ENCODE measurements at regions of chr2 and their contacts with region 1.

Region 1: GRCh38 chr2:218466016-218466521 is 47.1 kb downstream of the VIL1 start:
- DNase-seq: peak; percentile 34
- ATAC-seq: peak; percentile 69
- H3K4me3 ChIP-seq: no peak overlapping the region
- H3K27ac ChIP-seq: no peak overlapping the region
- H3K4me1 ChIP-seq: 0 out of 2 replicates have a peak, but pooled peaks cover 3% of the 10 kb centered on the region
- H3K27me3 ChIP-seq: no peaks in the 10 kb centered on the region
- CTCF ChIP-seq: peak; percentile 68
- EP300 ChIP-seq: no peak
- POLR2A ChIP-seq: no peak
- RAD21 ChIP-seq: no peak

Region 2: DNA sequence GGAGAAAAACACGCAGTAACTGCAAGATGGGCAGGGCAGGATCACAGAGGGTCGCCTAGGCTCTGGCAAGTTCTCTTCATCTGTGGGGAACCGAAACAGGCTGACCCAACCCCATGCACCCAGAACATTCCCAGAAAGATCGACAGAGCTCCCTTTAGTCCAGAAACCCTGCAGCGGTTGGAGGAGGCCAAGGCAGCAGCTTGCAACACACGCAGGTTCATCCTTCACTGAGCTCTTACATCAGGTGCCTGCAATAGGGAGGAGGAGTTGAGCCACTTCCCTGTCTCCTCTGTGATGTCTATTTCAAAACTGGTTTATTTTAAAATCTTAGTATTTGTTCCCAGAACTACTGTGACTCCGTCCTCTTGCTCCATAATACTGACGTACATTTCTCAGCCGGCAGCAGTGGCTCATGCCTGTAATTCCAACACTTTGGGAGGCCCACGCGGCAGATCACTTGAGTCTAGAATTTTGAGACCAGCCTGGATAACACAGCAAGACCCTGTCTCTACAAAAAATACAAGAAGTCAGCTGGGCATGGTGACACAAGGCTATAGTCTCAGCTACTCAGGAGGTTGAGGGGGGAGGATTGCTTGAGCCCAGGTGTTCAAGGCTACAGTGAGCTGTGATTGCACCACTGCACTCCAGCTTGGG is 95.5 kb before region 1 on chr2:
- CTCF ChIA-PET with region 1: no interaction called
- POLR2A ChIA-PET with region 1: no interaction called
- in situ Hi-C with region 1: no loop called
- intact Hi-C with region 1: no loop called
- DNase-seq: peak; percentile 57
- ATAC-seq: peak; percentile 69
- H3K4me3 ChIP-seq: peak overlapping the region in 1 of 3 experiments; percentile 0; a peak in 1 of 6 replicates
- H3K27ac ChIP-seq: no peak overlapping the region
- H3K4me1 ChIP-seq: peaks cover 49% of the 10 kb centered on the region
- H3K27me3 ChIP-seq: peaks cover 2% of the 10 kb centered on the region in 2 experiments; a peak in 2 of 5 replicates
- CTCF ChIP-seq: no peak
- EP300 ChIP-seq: no peak
- POLR2A ChIP-seq: no peak
- RAD21 ChIP-seq: no peak

Region 3: GRCh38 chr2:218406209-218406948 is 59.7 kb before region 1 on chr2:
- CTCF ChIA-PET with region 1: interaction called, 19 read pairs
- POLR2A ChIA-PET with region 1: interaction called, 7 read pairs
- in situ Hi-C with region 1: loop called (anchors 5 kb)
- intact Hi-C with region 1: loop called (anchors 1 kb)
- DNase-seq: peak; percentile 92
- ATAC-seq: peak; percentile 78
- H3K4me3 ChIP-seq: peak overlapping the region; percentile 67 to 86 (median 67)
- H3K27ac ChIP-seq: peak overlapping the region; percentile 79
- H3K4me1 ChIP-seq: peaks cover 61% of the 10 kb centered on the region
- H3K27me3 ChIP-seq: no peaks in the 10 kb centered on the region
- CTCF ChIP-seq: peak; percentile 98
- EP300 ChIP-seq: peak; percentile 37 to 53; a peak in 2 of 4 replicates
- POLR2A ChIP-seq: peak in 1 of 2 experiments; percentile 23; a peak in 1 of 4 replicates
- RAD21 ChIP-seq: peak; percentile 98

Region 4: GRCh38 chr2:218448934-218449333 is 17.1 kb before region 1 on chr2:
- CTCF ChIA-PET with region 1: no interaction called
- POLR2A ChIA-PET with region 1: no interaction called
- in situ Hi-C with region 1: no loop called
- intact Hi-C with region 1: no loop called
- DNase-seq: peak; percentile 86
- ATAC-seq: peak; percentile 29
- H3K4me3 ChIP-seq: no peak overlapping the region
- H3K27ac ChIP-seq: no peak overlapping the region
- H3K4me1 ChIP-seq: peaks cover 64% of the 10 kb centered on the region
- H3K27me3 ChIP-seq: no peaks in the 10 kb centered on the region
- CTCF ChIP-seq: no peak
- EP300 ChIP-seq: peak in 1 of 2 experiments; percentile 78; a peak in 2 of 4 replicates
- POLR2A ChIP-seq: no peak
- RAD21 ChIP-seq: no peak

Measured in HepG2 (cell line).